Activated T-helper 1 cell treated with anti-CD3 and anti-CD28 coated beads, Interleukin-12 subunit alpha, Interleukin-12 subunit beta, Interleukin-2, Interleukin-4 antibody, amounts not matched to agents 30 ng/mL and 10 ng/mL and 1 ng/mL, durations not matched to agents 14 hours and 24 hours and 36 hours (primary cell): ENCODE measurements at regions of chr12 and their contacts with region 1.

Region 1: GRCh38 chr12:39619660-39620433 is at the start of gene ABCD2:
- DNase-seq: peak; percentile 78
- H3K4me3 Mint-ChIP-seq: no peak within 1 kb of the TSS
- H3K27ac Mint-ChIP-seq: no peak within 1 kb of the TSS
- H3K4me1 Mint-ChIP-seq: peaks cover 38% of the 10 kb centered on the region
- H3K27me3 Mint-ChIP-seq: no peaks in the 10 kb centered on the region
- total RNA-seq, gene ABCD2: 7.8 and 8.0 TPM in 2 replicates

Region 2: GRCh38 chr12:38316391-38317129 is 1303.3 kb before region 1 on chr12 and contains the start of gene ALG10B:
- intact Hi-C with region 1: loop called (anchors 10 kb)
- DNase-seq: peak; percentile 90
- H3K4me3 Mint-ChIP-seq: peak within 1 kb of the TSS; percentile 97
- H3K27ac Mint-ChIP-seq: peak within 1 kb of the TSS; percentile 90
- H3K4me1 Mint-ChIP-seq: peaks cover 25% of the 10 kb centered on the region
- H3K27me3 Mint-ChIP-seq: no peaks in the 10 kb centered on the region
- total RNA-seq, gene ALG10B: 11.8 and 15.9 TPM in 2 replicates

Region 3: DNA sequence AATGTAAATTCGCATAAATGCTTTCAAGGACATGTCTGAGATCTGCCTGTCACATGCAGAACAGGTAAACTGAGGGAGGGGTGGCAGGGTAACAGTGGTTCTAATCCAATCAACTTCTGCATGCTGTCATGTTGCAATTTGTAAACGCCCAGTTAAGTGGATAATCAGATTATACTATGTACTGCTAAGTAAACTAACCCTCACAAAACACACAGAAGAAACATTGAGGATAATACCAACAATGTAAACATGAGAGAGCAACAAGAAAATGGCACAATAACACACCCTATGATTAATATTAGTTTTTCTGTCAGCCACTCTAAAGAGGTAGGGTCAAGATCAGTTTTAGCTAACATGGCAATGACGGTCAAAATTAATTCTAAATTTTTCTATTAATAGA is 300.7 kb before region 1 on chr12:
- intact Hi-C with region 1: loop called (anchors 1 kb)
- DNase-seq: no peak
- H3K4me3 Mint-ChIP-seq: no peak overlapping the region
- H3K27ac Mint-ChIP-seq: no peak overlapping the region
- H3K4me1 Mint-ChIP-seq: peaks cover 4% of the 10 kb centered on the region
- H3K27me3 Mint-ChIP-seq: no peaks in the 10 kb centered on the region

Region 4: GRCh38 chr12:39467432-39467870 is 152.4 kb before region 1 on chr12:
- intact Hi-C with region 1: loop called (anchors 1 kb)
- DNase-seq: no peak
- H3K4me3 Mint-ChIP-seq: no peak overlapping the region
- H3K27ac Mint-ChIP-seq: peak overlapping the region; percentile 62
- H3K4me1 Mint-ChIP-seq: peaks cover 20% of the 10 kb centered on the region
- H3K27me3 Mint-ChIP-seq: peaks cover 3% of the 10 kb centered on the region

Region 5: GRCh38 chr12:39605501-39605900 is 14.3 kb before region 1 on chr12:
- intact Hi-C with region 1: loop called (anchors 1 kb)
- DNase-seq: no peak
- H3K4me3 Mint-ChIP-seq: no peak overlapping the region
- H3K27ac Mint-ChIP-seq: no peak overlapping the region
- H3K4me1 Mint-ChIP-seq: peaks cover 47% of the 10 kb centered on the region
- H3K27me3 Mint-ChIP-seq: no peaks in the 10 kb centered on the region

Region 6: DNA sequence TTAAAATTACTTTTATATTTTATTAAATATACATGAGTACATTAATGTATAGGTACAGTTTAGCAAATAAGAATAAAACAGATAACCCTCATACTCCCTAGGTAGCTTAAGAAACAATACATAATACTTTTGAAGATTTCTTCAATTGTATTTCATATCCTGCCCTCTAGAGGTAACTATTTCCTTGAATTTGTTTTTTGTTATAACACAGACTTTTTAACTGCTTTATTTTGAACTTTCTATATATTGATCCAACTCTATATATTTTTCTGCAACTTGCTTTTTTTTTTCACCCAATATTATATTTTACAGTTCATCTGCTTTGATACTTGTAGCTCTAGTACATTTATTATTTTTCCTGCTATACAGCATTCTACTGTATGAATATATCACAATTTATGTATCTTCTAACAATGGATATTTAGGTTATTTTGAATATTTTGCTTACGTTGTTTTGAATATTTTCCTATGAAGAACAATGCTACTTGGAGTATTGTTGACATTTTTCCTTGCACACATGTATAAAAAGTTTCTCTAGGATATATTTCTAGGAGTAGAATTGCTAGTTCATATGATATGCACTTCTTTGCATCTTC is 72.5 kb after region 1 on chr12:
- intact Hi-C with region 1: loop called (anchors 1 kb)
- DNase-seq: no peak
- H3K4me3 Mint-ChIP-seq: no peak overlapping the region
- H3K27ac Mint-ChIP-seq: no peak overlapping the region
- H3K4me1 Mint-ChIP-seq: peaks cover 2% of the 10 kb centered on the region
- H3K27me3 Mint-ChIP-seq: peaks cover 4% of the 10 kb centered on the region

Region 7: GRCh38 chr12:40168868-40169267 is 549.0 kb after region 1 on chr12:
- intact Hi-C with region 1: loop called (anchors 2 kb)
- DNase-seq: no peak
- H3K4me3 Mint-ChIP-seq: no peak overlapping the region
- H3K27ac Mint-ChIP-seq: peak overlapping the region; percentile 41
- H3K4me1 Mint-ChIP-seq: peaks cover 19% of the 10 kb centered on the region
- H3K27me3 Mint-ChIP-seq: peaks cover 11% of the 10 kb centered on the region